ENCODE measurements at regions of chr20 and their contacts with region 1.

Region 1: DNA sequence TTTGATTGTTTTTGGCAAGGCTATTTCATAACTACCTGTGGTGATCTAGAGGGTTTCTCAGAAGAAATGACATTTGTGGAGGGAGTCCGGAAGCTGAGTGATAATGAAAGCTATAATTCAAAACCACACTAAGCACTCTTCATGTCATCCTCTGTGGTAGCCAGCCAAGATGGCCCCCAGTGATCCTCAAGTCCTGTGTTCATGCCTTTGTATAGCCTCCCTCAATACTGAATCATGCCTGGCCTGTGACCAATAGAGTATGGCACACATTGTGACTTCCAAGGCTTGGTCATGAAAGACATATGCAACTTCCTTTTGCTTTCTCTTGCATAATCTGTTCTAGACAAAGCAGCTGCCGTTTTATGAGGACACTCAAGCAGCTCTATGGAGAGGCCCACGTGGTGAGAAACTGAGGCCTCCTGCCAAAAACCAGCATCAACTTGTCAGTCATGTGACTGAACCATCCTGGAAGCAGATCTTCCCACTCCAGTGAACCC is 12.8 kb upstream of the DNAAF9 start:
- DNase-seq: peak; percentile 64
- H3K4me3 Mint-ChIP-seq: no peak overlapping the region
- H3K27ac Mint-ChIP-seq: no peak overlapping the region
- H3K4me1 Mint-ChIP-seq: peaks cover 6% of the 10 kb centered on the region
- H3K27me3 Mint-ChIP-seq: peaks cover 1% of the 10 kb centered on the region

Region 2: DNA sequence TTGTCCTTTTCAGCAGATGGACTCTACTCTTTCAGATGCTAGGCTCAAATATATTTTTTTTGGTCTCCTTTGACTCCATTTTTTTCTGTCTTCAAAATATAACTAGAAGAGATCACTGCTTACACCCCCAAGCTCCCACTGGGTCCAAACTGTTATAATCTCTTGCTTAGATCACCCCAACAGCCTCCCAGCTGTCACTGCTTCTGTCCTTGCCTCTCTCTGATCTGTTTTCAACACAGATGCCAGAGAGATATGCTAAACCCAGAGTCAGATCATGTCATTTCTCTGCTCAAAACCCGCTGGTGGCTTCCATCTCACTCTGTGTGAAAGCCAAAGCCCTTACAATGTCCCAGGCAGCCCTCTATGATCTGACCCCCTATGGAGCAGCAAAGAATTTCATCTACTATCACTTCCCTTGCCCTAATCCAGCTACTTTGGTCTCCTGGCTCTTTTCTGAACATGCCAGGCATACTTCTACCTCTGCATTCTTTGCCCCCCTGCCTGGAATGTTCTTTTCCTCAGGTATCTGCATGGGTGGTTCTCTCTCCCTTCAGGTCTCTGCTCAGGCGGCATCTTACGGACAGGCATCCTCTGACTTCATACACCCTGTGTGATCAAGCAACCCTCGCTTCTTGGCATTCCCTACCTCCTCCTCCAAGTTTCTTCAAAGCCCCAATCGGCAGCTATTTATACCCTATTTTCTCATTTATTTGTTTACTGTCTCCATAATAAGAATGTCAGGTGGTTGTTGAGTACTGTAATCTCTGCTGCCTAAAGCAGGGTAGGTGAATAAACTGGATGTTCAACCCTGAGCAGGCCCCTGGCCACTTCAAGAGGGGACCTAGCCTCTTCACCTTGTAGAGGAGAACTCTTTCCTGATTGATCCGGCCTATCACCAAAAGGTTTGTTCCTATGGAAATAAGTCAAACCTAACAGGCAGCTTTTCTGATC is 137.7 kb before region 1 on chr20:
- CTCF ChIA-PET with region 1: no interaction called
- intact Hi-C with region 1: no loop called
- DNase-seq: no peak
- H3K4me3 Mint-ChIP-seq: no peak overlapping the region
- H3K27ac Mint-ChIP-seq: no peak overlapping the region
- H3K4me1 Mint-ChIP-seq: no peaks in the 10 kb centered on the region
- H3K27me3 Mint-ChIP-seq: no peaks in the 10 kb centered on the region

Region 3: DNA sequence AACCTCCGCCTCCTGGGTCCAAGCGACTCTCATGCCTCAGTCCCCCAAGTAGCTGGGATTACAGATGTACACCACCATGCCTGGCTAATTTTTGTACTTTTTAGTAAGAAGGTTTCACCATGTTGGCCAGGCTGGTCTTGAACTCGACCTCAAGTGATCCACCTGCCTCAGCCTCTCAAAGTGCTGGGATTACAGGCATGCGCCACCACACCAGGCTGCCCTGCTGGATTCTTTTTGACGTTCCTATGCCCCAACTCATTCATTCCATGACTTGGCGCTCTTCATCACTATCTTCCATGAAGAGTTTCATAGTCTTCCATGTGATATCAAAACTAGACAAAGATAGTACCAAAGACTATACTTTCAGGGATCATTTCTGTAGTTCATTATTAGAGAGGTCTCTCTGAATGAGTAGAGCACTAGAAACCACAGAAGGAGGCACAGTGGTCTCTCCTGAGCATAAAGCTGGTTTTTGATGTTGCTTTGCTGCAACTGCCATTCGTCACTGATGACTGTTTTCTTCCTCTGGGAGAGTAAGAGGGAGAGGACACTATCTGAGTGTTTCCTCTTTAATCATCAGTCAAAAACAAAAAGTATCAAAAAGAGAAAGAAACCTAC is 36.3 kb before region 1 on chr20:
- CTCF ChIA-PET with region 1: no interaction called
- intact Hi-C with region 1: loop called (anchors 1 kb)
- DNase-seq: peak; percentile 66
- H3K4me3 Mint-ChIP-seq: no peak overlapping the region
- H3K27ac Mint-ChIP-seq: peak overlapping the region; percentile 59
- H3K4me1 Mint-ChIP-seq: peaks cover 14% of the 10 kb centered on the region
- H3K27me3 Mint-ChIP-seq: peaks cover 8% of the 10 kb centered on the region

Region 4: GRCh38 chr20:3398681-3399252 is 21.5 kb before region 1 on chr20:
- CTCF ChIA-PET with region 1: no interaction called
- intact Hi-C with region 1: no loop called
- DNase-seq: no peak
- H3K4me3 Mint-ChIP-seq: no peak overlapping the region
- H3K27ac Mint-ChIP-seq: no peak overlapping the region
- H3K4me1 Mint-ChIP-seq: no peaks in the 10 kb centered on the region
- H3K27me3 Mint-ChIP-seq: no peaks in the 10 kb centered on the region

Region 5: GRCh38 chr20:3436864-3437574 is 16.8 kb after region 1 on chr20:
- CTCF ChIA-PET with region 1: no interaction called
- intact Hi-C with region 1: no loop called
- DNase-seq: no peak
- H3K4me3 Mint-ChIP-seq: no peak overlapping the region
- H3K27ac Mint-ChIP-seq: no peak overlapping the region
- H3K4me1 Mint-ChIP-seq: no peaks in the 10 kb centered on the region
- H3K27me3 Mint-ChIP-seq: peaks cover 6% of the 10 kb centered on the region

Region 6: DNA sequence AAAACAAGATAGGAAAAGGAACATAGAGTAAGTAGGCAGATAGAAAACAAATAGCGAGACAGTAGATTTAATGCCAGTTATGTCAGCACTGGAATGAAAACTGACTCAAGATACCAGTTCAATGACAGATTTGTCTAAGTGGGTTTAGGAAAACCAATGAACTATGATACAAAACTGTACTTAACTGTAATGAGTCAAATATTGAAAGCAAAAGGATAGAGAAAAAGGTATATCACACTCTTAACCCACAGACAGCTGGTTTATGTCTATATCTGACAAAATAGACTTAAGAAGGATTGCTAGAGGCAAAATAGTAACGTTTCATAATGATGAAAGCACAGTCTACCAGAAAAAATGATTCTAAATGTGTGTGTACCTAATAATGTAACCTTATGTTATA is 88.8 kb after region 1 on chr20:
- CTCF ChIA-PET with region 1: no interaction called
- intact Hi-C with region 1: loop called (anchors 1 kb)
- DNase-seq: no peak
- H3K4me3 Mint-ChIP-seq: no peak overlapping the region
- H3K27ac Mint-ChIP-seq: no peak overlapping the region
- H3K4me1 Mint-ChIP-seq: peaks cover 7% of the 10 kb centered on the region
- H3K27me3 Mint-ChIP-seq: no peaks in the 10 kb centered on the region